ENCODE measurements at regions of chr2 and their contacts with region 1.

Region 1: DNA sequence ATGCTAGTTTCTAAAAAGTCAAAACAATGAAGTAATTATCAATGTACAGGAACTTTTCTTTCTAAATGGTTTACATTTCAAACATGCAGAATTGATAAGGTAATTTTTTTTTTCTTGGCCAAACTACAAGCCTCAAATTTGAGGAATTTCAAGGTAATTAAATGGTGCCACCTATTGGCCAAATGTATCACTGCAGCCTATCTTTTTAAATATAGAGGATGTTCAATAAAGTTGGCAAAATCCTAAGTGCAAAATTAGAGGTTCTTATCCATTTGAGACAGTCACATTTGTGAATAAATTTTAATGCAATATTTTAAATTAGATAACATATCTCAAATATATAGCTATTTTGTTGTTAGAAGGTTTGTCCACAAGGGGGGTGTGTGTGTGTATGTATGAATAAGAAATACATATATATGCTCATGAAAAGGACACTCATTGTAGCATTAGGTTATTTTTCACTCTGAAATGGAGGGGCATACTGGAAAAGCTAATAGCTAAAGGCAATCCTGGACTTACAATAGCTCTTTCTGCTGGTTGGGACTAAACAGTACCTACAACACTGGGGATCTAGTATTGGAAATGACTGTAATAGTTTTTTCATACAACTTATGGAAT is 26.2 kb downstream of the MMADHC start:
- DNase-seq: peak; percentile 57
- H3K4me3 ChIP-seq: no peak overlapping the region
- H3K27ac ChIP-seq: no peak overlapping the region
- H3K4me1 ChIP-seq: peaks cover 7% of the 10 kb centered on the region
- H3K27me3 ChIP-seq: no peaks in the 10 kb centered on the region
- CTCF ChIP-seq: peak; percentile 40 to 55
- POLR2A ChIP-seq: no peak

Region 2: DNA sequence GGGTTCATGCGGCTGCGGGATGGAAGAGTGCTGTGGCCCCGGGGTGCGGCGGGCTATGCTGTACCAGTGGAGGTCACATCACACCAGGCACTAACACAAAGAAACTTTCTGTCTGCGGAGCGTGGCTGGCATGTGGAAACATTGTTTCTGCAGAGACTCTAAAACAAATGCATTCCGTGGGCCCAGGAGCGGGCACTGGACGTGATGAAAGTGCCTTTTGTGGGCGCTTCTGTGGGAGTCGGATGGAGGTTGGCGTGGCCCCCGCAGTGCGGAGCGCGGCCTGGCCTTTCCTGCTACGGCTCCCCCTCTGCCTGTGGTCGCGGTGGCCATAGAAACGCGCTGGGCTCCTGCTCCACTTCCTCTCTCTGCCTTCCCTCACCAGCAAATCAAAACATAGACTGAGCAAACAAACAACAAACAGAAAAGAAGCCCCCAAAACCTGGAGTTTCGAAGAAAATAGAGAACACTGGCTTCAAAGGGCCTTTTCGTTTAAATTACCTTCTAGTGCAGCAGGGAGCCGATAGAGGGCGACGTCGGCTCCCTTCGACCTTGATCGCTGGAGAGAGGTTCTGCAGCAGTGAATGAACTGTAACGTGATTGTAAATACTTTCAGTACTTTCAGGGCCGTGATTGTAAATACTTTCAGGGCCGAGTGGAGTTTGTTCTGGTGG is 635.0 kb before region 1 on chr2:
- CTCF ChIA-PET with region 1: no interaction called
- POLR2A ChIA-PET with region 1: no interaction called
- dilution Hi-C with region 1: no loop called
- intact Hi-C with region 1: loop called (anchors 1 kb)
- DNase-seq: peak; percentile 58
- H3K4me3 ChIP-seq: no peak overlapping the region
- H3K27ac ChIP-seq: no peak overlapping the region
- H3K4me1 ChIP-seq: no peaks in the 10 kb centered on the region
- H3K27me3 ChIP-seq: no peaks in the 10 kb centered on the region
- CTCF ChIP-seq: peak; percentile 74 to 75
- POLR2A ChIP-seq: no peak

Region 3: GRCh38 chr2:149040451-149040850 is 521.0 kb before region 1 on chr2:
- CTCF ChIA-PET with region 1: interaction called, 11 read pairs
- POLR2A ChIA-PET with region 1: no interaction called
- dilution Hi-C with region 1: no loop called
- intact Hi-C with region 1: no loop called
- DNase-seq: peak; percentile 14
- H3K4me3 ChIP-seq: no peak overlapping the region
- H3K27ac ChIP-seq: no peak overlapping the region
- H3K4me1 ChIP-seq: no peaks in the 10 kb centered on the region
- H3K27me3 ChIP-seq: peaks cover 22% of the 10 kb centered on the region in 2 experiments
- CTCF ChIP-seq: peak; percentile 37 to 43
- POLR2A ChIP-seq: no peak

Region 4: DNA sequence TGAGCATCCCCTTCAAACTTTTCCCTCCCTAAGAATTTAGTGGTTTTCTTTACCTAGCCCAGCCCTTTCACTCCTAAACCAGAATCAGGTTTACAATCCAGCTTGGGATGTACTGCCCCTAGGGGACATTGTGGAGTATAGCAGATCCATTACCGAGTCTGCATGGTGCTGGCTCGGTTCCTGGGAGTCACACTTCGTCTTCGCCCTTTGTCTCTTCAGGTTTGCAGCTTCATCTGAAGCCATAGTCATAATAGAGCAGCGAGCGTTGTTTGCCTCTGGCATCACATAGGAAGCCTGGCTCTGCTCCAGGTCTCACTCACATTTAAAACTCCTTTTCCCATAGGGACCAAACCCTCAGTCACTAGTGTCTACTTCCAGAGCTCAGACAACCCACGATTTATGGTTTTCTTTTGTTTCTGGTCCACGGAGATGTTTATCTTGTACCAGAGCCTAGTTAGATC is 247.9 kb before region 1 on chr2:
- CTCF ChIA-PET with region 1: interaction called, 4 read pairs
- POLR2A ChIA-PET with region 1: no interaction called
- dilution Hi-C with region 1: no loop called
- intact Hi-C with region 1: loop called (anchors 5 kb)
- DNase-seq: peak; percentile 40
- H3K4me3 ChIP-seq: no peak overlapping the region
- H3K27ac ChIP-seq: no peak overlapping the region
- H3K4me1 ChIP-seq: no peaks in the 10 kb centered on the region
- H3K27me3 ChIP-seq: peaks cover 3 to 8% of the 10 kb centered on the region in 2 experiments
- CTCF ChIP-seq: peak; percentile 65 to 73
- POLR2A ChIP-seq: no peak

Region 5: GRCh38 chr2:149573760-149574159 is 12.3 kb after region 1 on chr2:
- CTCF ChIA-PET with region 1: interaction called, 17 read pairs
- POLR2A ChIA-PET with region 1: no interaction called
- dilution Hi-C with region 1: no loop called
- intact Hi-C with region 1: no loop called
- DNase-seq: peak; percentile 13
- H3K4me3 ChIP-seq: no peak overlapping the region
- H3K27ac ChIP-seq: no peak overlapping the region
- H3K4me1 ChIP-seq: no peaks in the 10 kb centered on the region
- H3K27me3 ChIP-seq: no peaks in the 10 kb centered on the region
- CTCF ChIP-seq: peak in 1 of 2 donors; percentile 4
- POLR2A ChIP-seq: no peak

Region 6: DNA sequence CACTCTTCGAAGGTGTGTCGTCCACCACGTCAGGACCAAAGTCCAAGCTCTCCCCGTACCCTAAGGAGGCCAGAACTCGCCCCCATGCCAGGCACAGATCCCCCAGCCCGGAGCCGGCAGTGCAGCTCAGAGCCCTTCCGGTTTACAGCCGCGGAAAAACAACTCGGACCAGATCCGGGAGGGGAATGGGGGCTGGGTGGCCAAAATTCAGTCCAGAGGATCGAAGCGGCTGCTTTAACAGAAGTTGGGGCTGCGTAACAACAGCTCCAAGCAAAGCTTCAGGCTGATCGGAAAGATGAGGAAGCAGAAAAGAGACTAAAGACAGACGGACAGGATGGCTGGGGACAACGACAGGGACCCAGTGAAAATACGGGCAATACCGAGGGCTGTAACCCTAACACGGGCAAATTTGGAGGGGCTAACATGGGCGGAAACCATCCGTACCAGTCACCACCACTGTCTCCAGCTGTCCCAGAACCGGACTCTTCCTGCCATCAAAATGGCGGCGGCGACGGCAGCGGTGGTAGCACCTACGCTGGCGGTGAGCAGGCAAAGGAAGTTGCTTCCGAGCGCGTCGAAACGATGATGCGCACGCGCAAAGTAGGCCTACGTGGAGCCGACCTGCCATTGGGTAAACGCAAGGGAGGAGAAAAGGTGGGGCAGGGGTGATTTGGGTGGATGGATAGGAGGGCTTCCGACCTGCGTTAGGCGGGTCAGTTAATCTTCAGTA is 26.0 kb after region 1 on chr2 and contains the start of gene MMADHC:
- CTCF ChIA-PET with region 1: no interaction called
- POLR2A ChIA-PET with region 1: no interaction called
- dilution Hi-C with region 1: no loop called
- intact Hi-C with region 1: no loop called
- DNase-seq: peak; percentile 94
- H3K4me3 ChIP-seq: peak within 1 kb of the TSS; percentile 46 to 92 (median 66)
- H3K27ac ChIP-seq: peak within 1 kb of the TSS; percentile 89
- H3K4me1 ChIP-seq: peaks cover 24% of the 10 kb centered on the region
- H3K27me3 ChIP-seq: no peaks in the 10 kb centered on the region
- CTCF ChIP-seq: no peak
- POLR2A ChIP-seq: peak; percentile 95
- total RNA-seq, gene MMADHC: 115 and 119 TPM in 2 replicates